Prostate gland (tissue), 2 donors: ENCODE measurements at regions of chr2 and their contacts with region 1.

Region 1: GRCh38 chr2:44087036-44087713 is 81.5 kb upstream of the PPM1B start:
- DNase-seq: peak; percentile 79
- H3K4me3 ChIP-seq: peak overlapping the region; percentile 14 to 30
- H3K27ac ChIP-seq: peak overlapping the region; percentile 66 to 78
- H3K4me1 ChIP-seq: peaks cover 6% of the 10 kb centered on the region
- H3K27me3 ChIP-seq: no peaks in the 10 kb centered on the region
- CTCF ChIP-seq: peak; percentile 91 to 96 (median 96)
- POLR2A ChIP-seq: peak; percentile 20

Region 2: DNA sequence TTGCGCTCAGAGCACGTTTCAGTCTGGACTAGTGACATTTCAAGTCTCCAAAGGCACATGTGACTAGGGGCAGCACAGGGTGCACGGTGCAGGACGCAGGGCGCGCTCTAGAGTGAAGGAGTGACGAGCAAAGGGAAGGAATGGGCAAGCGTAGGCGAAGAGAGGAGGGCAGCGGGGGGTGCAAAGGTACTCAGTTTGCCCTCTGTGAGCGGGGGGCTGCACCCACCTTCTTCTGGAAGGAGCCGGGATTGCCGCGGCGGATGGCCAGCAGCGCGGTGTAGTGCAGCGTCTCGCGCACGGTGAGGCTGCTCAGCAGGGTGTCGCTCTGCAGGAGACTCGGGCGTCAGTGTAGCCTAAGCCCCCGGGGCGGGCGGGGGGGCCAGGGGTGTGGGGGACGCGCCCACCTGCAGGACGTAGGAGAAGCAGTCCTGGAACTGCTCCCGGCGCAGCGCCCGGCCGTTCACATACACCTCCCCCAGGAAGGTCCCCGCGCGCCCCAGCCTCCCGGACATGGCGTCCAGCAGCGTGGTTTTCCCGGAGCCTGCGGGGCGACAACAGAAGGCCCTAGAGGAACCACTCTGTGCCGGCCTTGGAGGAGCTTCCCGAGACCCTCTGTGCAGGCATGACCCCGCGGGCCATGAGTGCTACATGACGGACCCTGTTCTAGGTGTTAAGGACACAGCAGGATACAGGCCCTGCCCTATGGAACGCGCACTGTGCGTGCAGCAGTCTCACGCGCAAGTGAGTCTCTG is 255.5 kb before region 1 on chr2:
- intact Hi-C with region 1: no loop called
- DNase-seq: no peak
- H3K4me3 ChIP-seq: peak overlapping the region in 1 of 2 donors; percentile 17
- H3K27ac ChIP-seq: no peak overlapping the region
- H3K4me1 ChIP-seq: no peaks in the 10 kb centered on the region
- H3K27me3 ChIP-seq: peaks cover 3% of the 10 kb centered on the region
- CTCF ChIP-seq: no peak
- POLR2A ChIP-seq: no peak

Region 3: DNA sequence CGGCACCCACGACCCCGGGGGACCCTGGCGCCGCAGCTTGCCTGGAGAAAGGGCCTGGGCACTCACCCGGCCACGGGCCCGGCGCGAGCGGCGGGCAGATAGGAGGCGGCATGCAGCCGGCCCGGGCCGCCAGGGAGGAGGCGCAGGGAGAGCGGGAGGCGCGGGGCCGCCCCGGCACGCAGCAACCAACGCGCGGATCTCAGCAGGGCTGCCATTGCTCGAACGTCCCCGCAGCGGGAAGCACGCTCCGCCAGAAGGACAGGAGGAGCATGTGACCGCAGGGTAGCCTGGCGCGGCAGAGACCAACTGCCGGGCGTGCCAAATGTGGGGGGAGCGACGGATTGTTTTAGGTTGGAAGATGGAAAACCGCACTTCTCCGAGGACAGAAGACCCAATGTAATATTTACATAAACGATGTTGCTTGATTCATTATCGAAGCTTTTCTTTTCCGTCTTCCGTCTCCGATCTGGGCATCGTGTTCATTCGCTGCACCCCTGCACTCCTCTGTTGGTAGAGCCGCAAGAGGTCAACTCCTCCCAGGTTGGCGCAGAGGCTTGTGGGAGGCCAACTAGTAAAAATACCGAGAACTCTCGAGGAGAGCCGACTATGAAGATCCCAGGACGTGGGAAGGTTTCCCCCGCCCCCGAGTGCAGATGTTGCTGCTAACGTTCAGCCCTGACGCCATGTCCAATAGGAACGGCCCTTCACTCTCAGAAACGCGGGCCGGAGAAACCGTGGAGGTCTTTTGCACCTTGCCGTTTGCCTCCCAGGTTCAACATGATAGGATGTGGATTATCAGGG is 91.2 kb before region 1 on chr2 and contains the start of gene LRPPRC:
- intact Hi-C with region 1: no loop called
- DNase-seq: peak; percentile 92
- H3K4me3 ChIP-seq: peak within 1 kb of the TSS; percentile 88 to 97
- H3K27ac ChIP-seq: peak within 1 kb of the TSS; percentile 70 to 80
- H3K4me1 ChIP-seq: peaks cover 8% of the 10 kb centered on the region
- H3K27me3 ChIP-seq: no peaks in the 10 kb centered on the region
- CTCF ChIP-seq: peak in 2 of 4 experiments; percentile 7 to 14
- POLR2A ChIP-seq: peak; percentile 83
- total RNA-seq, gene LRPPRC: 49.3 to 82.3 TPM

Region 4: GRCh38 chr2:44136186-44136585 is 49.0 kb after region 1 on chr2:
- intact Hi-C with region 1: loop called (anchors 5 kb)
- DNase-seq: no peak
- H3K4me3 ChIP-seq: no peak overlapping the region
- H3K27ac ChIP-seq: no peak overlapping the region
- H3K4me1 ChIP-seq: no peaks in the 10 kb centered on the region
- H3K27me3 ChIP-seq: no peaks in the 10 kb centered on the region
- CTCF ChIP-seq: no peak
- POLR2A ChIP-seq: no peak

Region 5: DNA sequence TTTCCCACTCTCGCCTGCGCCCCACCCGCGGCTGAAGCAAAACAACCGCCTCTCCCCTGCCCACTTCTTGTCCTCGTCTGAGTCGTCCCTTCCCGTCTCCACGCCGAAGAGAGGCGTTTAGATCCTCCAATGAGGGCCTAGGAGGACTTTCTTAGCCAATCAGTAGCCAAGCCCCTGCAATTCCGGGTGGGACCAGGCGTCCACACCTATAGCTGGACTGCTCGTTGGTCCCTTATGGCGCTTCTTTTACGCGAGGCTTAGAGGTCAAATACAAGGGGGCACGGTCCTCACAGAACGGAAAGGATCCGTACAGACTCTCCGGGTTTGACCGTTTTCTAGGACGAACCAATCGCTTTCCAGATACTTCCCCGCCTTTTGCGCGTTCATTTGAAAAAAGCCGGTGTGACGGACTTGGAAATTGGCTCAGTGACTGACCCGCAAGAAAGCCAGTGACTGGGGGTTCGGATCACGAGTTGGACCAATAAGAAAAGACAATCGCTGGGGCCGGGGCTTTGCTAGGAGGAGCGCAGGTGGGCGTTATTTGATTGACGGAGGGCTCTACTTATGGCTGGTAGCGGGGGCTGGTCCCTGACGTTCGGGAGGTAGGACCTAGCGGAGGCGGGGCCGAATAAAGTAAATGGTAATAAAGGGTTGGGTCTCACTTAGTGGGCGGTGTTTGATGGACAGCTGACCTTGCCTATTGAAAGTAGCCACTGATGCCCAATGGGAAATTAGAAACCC is 80.9 kb after region 1 on chr2:
- intact Hi-C with region 1: loop called (anchors 5 kb)
- DNase-seq: peak; percentile 98
- H3K4me3 ChIP-seq: peak overlapping the region; percentile 43 to 49
- H3K27ac ChIP-seq: peak overlapping the region; percentile 96
- H3K4me1 ChIP-seq: no peaks in the 10 kb centered on the region
- H3K27me3 ChIP-seq: no peaks in the 10 kb centered on the region
- CTCF ChIP-seq: peak in 2 of 4 experiments; percentile 27 to 34
- POLR2A ChIP-seq: peak; percentile 44

Region 6: DNA sequence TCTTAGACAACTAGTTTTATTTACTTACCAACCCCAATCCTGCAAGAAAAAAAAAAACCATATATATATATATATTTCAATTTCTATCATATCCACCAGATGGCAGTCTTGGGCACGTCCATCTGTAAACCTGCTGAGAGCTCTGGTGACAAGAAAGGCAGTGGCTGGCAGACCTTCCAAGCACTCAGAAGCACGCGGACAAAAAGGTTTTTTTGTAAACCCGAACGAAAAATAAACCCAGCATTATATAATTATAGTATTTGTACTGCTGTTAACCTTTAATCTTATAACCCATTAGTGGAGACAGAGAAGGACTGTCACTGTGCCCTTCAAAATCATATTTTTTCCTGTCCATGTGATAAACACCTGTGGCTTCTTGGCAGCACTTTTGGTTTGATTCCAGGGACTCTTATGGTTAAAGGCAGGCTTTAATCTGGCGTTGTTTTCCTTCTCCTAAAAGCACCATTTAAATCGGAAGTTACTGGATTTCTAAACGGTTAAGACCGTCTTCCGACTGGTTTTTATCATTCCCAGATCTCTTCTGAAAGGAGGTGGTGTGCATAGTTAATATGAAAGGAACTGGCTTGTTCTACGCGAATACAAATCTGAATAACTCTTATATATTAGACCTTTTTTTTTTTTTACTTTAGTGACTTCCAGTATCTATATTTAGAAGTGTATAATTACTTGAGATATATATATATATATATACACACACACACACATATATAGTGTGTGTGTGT is 157.1 kb after region 1 on chr2:
- intact Hi-C with region 1: loop called (anchors 5 kb)
- DNase-seq: peak; percentile 77
- H3K4me3 ChIP-seq: peak overlapping the region; percentile 1 to 23
- H3K27ac ChIP-seq: peak overlapping the region; percentile 43 to 44
- H3K4me1 ChIP-seq: no peaks in the 10 kb centered on the region
- H3K27me3 ChIP-seq: no peaks in the 10 kb centered on the region
- CTCF ChIP-seq: peak; percentile 36 to 73 (median 50)
- POLR2A ChIP-seq: no peak

Region 7: GRCh38 chr2:44275927-44276303 is 188.7 kb after region 1 on chr2:
- intact Hi-C with region 1: no loop called
- DNase-seq: no peak
- H3K4me3 ChIP-seq: no peak overlapping the region
- H3K27ac ChIP-seq: peak overlapping the region in 1 of 2 donors; percentile 44
- H3K4me1 ChIP-seq: no peaks in the 10 kb centered on the region
- H3K27me3 ChIP-seq: no peaks in the 10 kb centered on the region
- CTCF ChIP-seq: no peak
- POLR2A ChIP-seq: no peak

Region 8: GRCh38 chr2:44291281-44292248 is 204.4 kb after region 1 on chr2:
- intact Hi-C with region 1: loop called (anchors 2 kb)
- DNase-seq: peak; percentile 75
- H3K4me3 ChIP-seq: no peak overlapping the region
- H3K27ac ChIP-seq: peak overlapping the region in 1 of 2 donors; percentile 29
- H3K4me1 ChIP-seq: no peaks in the 10 kb centered on the region
- H3K27me3 ChIP-seq: no peaks in the 10 kb centered on the region
- CTCF ChIP-seq: peak in 3 of 4 experiments; percentile 60 to 82 (median 76)
- POLR2A ChIP-seq: no peak